BJ (cell line): ENCODE measurements at regions of chr14 and their contacts with region 1.

Region 1: GRCh38 chr14:54813081-54813480 is 89.5 kb downstream of the GCH1 start:
- DNase-seq: no peak
- H3K4me3 ChIP-seq: no peak overlapping the region
- H3K27me3 ChIP-seq: peaks cover 11% of the 10 kb centered on the region
- CTCF ChIP-seq: no peak

Region 2: DNA sequence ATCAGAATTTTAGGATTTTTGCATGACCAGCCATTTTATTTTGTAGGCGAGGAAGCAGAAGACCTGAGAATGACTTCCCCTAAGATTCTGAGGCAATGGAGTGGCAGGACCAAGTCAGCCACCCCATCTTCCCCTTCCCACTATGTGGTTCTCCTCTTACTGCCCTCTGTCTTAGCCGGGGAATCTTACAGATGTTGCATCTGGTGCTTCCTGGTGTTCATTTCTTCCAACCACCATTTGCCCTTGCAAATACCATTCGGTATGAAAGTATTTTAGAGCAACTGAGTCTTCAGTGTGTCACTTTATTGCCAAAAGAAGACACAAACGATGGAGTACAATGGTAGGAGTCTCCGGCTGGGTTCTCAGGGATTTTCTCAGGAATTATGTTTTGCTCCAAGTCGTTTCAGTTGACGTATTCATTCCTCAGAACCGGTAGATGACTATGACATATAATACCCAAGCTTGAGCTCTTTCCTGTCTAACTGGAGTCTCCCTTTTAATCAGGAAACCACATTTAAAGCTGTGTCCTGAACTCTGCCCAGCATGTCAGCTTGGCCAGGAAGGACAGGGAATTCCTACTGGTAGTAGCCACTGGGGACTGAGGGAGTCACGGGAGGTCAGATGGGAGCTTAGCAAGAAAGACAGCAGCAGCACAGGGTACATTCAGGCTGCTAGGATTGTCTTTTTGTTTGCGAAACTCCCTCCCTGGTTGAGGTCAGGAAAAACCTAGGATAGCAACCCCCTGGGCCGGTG is 159.2 kb before region 1 on chr14:
- CTCF ChIA-PET with region 1: no interaction called
- POLR2A ChIA-PET with region 1: no interaction called
- DNase-seq: no peak
- H3K4me3 ChIP-seq: no peak overlapping the region
- H3K27me3 ChIP-seq: no peaks in the 10 kb centered on the region
- CTCF ChIP-seq: no peak

Region 3: DNA sequence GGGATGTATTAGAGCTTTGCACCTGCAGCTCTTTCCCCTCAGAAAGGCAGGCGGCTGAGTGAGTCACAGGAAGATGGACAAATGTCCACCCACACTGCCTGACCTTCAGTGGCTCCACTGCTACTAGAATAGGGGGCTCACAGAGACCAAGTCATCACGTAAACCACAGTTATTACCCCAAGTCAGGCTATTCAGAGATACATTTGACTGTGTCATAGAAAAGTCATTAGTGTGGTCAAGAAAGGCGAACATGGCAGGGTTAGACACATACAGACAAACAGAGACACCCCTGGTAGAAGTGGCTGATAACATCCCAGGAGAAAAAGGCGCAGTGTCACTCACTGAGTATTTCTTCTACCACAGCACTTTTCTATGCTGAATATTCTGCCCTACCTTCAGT is 53.5 kb after region 1 on chr14:
- CTCF ChIA-PET with region 1: no interaction called
- POLR2A ChIA-PET with region 1: interaction called, 14 read pairs
- DNase-seq: no peak
- H3K4me3 ChIP-seq: no peak overlapping the region
- H3K27me3 ChIP-seq: peaks cover 4% of the 10 kb centered on the region; the same call in 1 of the 2 replicates
- CTCF ChIP-seq: no peak